ENCODE measurements at regions of chr9 and their contacts with region 1.

Region 1: GRCh38 chr9:123302348-123303214 is 34.2 kb upstream of the STRBP start:
- DNase-seq: peak; percentile 8
- H3K4me3 Mint-ChIP-seq: no peak overlapping the region
- H3K27ac Mint-ChIP-seq: peak overlapping the region; percentile 31
- H3K4me1 Mint-ChIP-seq: peaks cover 18% of the 10 kb centered on the region
- H3K27me3 Mint-ChIP-seq: no peaks in the 10 kb centered on the region

Region 2: DNA sequence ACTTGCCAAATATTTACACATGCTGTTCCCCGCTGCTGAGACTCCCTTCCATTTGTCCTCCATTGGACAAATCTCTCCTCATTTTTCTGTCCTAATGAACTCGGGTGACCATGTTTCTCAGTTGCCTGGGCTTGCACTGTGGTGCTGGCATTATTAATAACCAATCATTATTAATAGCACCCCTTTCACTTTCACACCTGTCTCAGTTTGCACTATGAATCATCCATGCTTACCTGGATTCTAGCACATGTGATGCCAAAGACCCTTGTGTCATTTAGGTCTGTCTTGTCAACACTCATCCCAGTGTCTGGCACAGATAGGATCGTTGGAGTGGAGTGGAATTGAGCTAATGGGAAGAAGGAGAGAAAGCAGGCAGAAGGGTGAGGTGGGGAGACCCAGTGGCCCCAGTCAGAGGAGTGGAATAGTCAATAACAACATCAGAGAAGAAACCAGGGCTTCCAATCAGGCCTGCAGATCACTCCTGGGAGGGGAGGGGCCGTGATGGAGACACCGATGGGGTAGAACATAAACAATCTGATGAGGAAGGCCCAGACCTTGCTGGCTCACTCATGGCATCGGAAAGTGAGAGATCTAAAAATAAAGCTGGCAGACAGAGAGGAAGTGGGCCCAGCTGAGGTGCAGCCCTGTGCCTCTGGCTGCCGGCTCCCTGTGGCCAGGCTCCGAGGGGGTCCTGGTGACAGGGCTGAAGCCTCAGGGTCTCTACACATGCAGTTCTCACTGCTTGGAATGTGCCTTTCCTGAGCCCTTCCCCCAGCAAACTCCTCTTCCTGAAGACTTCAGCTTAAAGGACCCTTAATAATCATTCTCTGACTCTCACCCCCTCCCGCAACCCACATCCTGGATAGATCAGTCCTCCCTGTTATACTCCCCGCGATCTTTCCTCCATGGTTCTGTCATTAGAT is 20.0 kb after region 1 on chr9:
- intact Hi-C with region 1: loop called (anchors 1 kb)
- DNase-seq: peak; percentile 51
- H3K4me3 Mint-ChIP-seq: peak overlapping the region; percentile 70
- H3K27ac Mint-ChIP-seq: peak overlapping the region; percentile 80
- H3K4me1 Mint-ChIP-seq: peaks cover 37% of the 10 kb centered on the region
- H3K27me3 Mint-ChIP-seq: peaks cover 6% of the 10 kb centered on the region

Region 3: DNA sequence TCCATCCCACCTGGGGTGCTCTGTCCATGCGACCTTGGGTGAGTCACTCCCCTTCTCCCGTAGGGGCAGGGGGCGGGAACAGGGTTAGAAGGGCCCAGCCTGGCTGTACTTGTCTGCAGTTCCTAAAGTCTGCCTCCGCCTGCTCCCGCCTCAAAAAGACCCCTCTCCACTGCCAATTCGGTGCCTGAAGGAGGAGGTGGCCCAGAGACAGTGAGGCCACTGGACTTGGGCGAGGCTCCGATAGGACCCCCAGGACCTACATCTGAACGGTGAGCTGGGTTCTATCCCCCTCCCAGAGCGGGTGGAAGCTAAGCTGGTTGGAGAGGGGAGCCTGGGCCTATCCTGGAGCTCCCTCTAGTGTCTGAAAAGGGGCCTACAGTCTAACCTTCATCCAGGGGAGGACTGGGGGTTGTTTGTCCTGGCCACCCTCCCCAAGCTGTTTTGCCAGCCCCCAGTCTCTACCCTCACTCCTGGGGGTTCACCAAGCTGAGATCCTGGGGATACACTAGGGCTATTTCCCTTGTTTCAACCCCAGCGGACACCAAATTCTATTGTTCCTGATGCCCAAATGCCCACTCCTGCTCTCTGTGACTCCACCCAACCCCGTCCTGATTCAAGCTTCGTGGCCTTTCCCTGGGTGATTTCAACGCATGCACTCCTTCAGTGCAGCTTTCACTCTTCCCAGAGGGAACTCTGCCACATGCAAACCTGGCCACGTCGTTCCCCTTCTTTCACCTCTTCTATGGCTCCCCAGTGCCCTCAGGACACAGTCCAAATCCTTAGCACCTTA is 47.3 kb after region 1 on chr9:
- intact Hi-C with region 1: no loop called
- DNase-seq: peak; percentile 55
- H3K4me3 Mint-ChIP-seq: no peak overlapping the region
- H3K27ac Mint-ChIP-seq: no peak overlapping the region
- H3K4me1 Mint-ChIP-seq: no peaks in the 10 kb centered on the region
- H3K27me3 Mint-ChIP-seq: peaks cover 12% of the 10 kb centered on the region

Measured in activated T-helper 1 cell treated with anti-CD3 and anti-CD28 coated beads, Interleukin-12 subunit alpha, Interleukin-12 subunit beta, Interleukin-2, Interleukin-4 antibody, amounts not matched to agents 30 ng/mL and 10 ng/mL and 1 ng/mL, durations not matched to agents 14 hours and 24 hours and 36 hours (primary cell).